ENCODE measurements at regions of chr17 and their contacts with region 1.

Region 1: DNA sequence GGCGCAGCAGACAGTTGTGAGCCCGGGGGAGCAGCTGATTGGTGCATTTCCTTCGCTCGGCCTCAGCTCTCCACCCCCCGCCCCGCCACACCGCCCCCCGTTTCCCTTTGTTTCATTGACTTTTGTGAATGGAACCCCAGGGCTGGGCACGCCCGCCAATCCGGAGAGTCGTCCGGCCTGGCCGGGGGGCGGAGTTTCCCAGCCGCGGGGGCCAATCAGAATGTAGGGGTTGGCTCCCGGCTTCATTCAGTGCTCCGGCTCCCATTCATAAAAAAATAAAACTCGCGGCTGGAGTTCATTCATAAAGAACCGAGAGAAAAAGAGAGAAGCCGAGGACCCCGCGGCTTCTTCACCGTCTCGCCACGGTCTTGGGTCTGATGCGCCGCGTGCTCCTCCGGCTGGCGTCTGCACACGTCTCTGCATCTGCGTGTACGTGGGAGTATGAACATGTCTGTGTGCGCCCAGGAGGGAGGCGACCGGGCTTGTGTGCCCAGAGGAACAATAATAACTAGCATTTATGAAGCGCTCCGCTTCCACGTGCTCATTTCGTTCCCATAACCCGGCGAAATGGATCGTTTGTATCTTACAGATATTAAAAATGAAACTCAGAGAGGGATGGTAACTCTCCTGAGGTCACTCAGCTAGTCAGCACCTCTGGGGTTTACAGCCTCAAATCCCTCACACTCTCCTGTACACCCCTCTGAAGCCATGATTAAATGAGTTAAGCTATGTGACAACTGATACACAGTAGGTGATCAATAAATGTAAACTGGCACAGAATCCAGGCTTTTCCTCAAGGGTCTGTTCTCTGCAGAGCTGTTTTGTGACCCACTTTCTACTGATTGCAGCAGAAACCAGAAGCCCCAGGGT is at the start of gene ETV4:
- DNase-seq: peak; percentile 97
- H3K4me3 ChIP-seq: peak within 1 kb of the TSS; percentile 44 to 75 (median 60)
- H3K27ac ChIP-seq: peak within 1 kb of the TSS; percentile 84
- H3K4me1 ChIP-seq: peaks cover 46% of the 10 kb centered on the region
- H3K27me3 ChIP-seq: no peaks in the 10 kb centered on the region
- CTCF ChIP-seq: no peak
- total RNA-seq, gene ETV4: 10.2 to 46.0 TPM

Region 2: DNA sequence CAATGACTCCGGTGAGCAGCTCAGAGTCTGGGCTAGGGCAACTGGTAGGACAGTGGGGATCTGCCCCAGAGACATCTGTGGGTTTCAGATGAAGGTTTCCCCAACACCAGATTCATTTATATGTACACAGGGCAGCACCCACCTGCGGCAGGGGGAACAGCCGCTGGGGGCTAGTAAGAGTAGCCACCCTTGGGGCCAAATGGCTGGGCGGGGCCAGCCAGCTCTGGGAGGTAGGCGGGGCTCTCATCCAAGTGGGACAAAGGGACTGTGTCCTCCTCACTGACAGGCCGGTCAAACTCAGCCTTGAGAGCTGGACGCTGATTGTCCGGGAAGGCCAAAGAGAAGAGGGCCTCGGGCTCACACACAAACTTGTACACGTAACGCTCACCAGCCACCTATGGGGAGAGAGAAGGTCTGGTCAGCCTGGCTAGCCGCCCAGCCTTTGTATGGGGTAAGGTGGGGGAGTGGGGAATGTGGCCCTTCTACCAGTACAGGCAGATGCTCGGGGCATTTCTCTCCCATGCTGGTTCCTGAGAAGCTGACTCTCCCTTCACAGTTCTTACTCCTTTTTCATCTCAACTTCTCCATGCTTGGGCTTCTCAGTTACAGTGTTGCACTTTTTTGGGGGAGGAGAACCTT is 18.1 kb before region 1 on chr17:
- CTCF ChIA-PET with region 1: interaction called, 12 read pairs
- dilution Hi-C with region 1: no loop called
- in situ Hi-C with region 1: no loop called
- intact Hi-C with region 1: no loop called
- DNase-seq: no peak
- H3K4me3 ChIP-seq: no peak overlapping the region
- H3K27ac ChIP-seq: no peak overlapping the region
- H3K4me1 ChIP-seq: peaks cover 27% of the 10 kb centered on the region
- H3K27me3 ChIP-seq: no peaks in the 10 kb centered on the region
- CTCF ChIP-seq: no peak